Mammary epithelial cell (primary cell): ENCODE measurements at regions of chr1 and their contacts with region 1.

Region 1: GRCh38 chr1:183185941-183186490 is at the start of gene LAMC2:
- DNase-seq: peak; percentile 99
- H3K4me3 ChIP-seq: peak within 1 kb of the TSS; percentile 62 to 98 (median 92)
- H3K27ac ChIP-seq: peak within 1 kb of the TSS; percentile 100
- H3K4me1 ChIP-seq: peaks cover 55% of the 10 kb centered on the region
- H3K27me3 ChIP-seq: no peaks in the 10 kb centered on the region
- CTCF ChIP-seq: peak; percentile 34 to 71
- total RNA-seq, gene LAMC2: 1,201 to 2,277 TPM

Region 2: GRCh38 chr1:183070923-183071618 is 114.9 kb before region 1 on chr1:
- CTCF ChIA-PET with region 1: no interaction called
- dilution Hi-C with region 1: no loop called
- in situ Hi-C with region 1: no loop called
- intact Hi-C with region 1: loop called (anchors 5 kb)
- DNase-seq: peak; percentile 82
- H3K4me3 ChIP-seq: no peak overlapping the region
- H3K27ac ChIP-seq: no peak overlapping the region
- H3K4me1 ChIP-seq: peaks cover 25% of the 10 kb centered on the region
- H3K27me3 ChIP-seq: no peaks in the 10 kb centered on the region
- CTCF ChIP-seq: no peak

Region 3: GRCh38 chr1:183124259-183124658 is 61.8 kb before region 1 on chr1:
- CTCF ChIA-PET with region 1: interaction called, 3 read pairs
- dilution Hi-C with region 1: no loop called
- in situ Hi-C with region 1: no loop called
- intact Hi-C with region 1: loop called (anchors 2 kb)
- DNase-seq: no peak
- H3K4me3 ChIP-seq: no peak overlapping the region
- H3K27ac ChIP-seq: no peak overlapping the region
- H3K4me1 ChIP-seq: no peaks in the 10 kb centered on the region
- H3K27me3 ChIP-seq: no peaks in the 10 kb centered on the region
- CTCF ChIP-seq: no peak

Region 4: GRCh38 chr1:183139281-183139942 is 46.6 kb before region 1 on chr1:
- CTCF ChIA-PET with region 1: no interaction called
- dilution Hi-C with region 1: loop called (anchors 5 kb)
- in situ Hi-C with region 1: loop called in 1 of 2 experiments (anchors 5 kb)
- intact Hi-C with region 1: loop called (anchors 1 kb)
- DNase-seq: peak; percentile 84
- H3K4me3 ChIP-seq: no peak overlapping the region
- H3K27ac ChIP-seq: peak overlapping the region; percentile 79
- H3K4me1 ChIP-seq: peaks cover 30% of the 10 kb centered on the region
- H3K27me3 ChIP-seq: no peaks in the 10 kb centered on the region
- CTCF ChIP-seq: no peak

Region 5: DNA sequence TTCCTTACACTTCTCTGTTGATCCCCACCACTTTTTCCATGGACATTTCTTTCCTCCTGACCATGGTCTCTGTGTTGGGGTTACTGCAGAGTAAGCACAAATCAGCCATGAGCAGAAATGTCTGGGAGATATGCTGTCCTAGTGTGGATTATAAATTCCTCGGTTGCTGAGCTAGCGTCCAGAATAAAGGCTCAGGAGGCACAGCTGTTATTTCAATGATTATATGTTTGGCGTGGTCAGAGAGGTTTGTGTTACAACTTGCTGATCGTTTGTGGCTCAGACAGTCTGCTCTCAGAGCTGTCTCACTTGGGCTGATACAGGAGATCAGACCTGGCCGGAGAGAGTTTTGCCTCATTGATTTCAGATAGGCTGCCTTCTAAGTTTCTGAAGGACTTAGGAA is 37.4 kb before region 1 on chr1:
- CTCF ChIA-PET with region 1: interaction called, 5 read pairs
- dilution Hi-C with region 1: no loop called
- in situ Hi-C with region 1: no loop called
- intact Hi-C with region 1: loop called (anchors 2 kb)
- DNase-seq: peak; percentile 76
- H3K4me3 ChIP-seq: no peak overlapping the region
- H3K27ac ChIP-seq: peak overlapping the region; percentile 53
- H3K4me1 ChIP-seq: peaks cover 22% of the 10 kb centered on the region
- H3K27me3 ChIP-seq: no peaks in the 10 kb centered on the region
- CTCF ChIP-seq: no peak

Region 6: DNA sequence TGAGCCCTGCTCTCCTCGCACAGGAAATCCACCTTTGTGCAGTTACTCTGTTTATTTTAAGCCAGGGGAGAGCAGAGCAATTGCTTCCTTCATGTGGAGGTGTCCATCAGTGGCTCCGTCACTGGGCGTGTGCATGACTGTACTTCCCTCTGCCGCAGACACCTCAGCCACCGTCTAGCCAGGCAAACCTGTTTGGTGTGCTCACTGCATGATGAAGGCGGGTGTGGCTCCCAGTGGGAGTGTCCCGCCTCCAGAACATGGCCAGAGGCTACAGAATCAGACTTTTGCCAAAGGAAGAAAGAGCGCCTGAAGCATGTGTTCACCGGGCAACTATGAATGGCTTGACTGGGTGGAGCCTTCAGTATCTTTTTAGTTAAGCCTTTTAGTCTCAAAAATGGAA is 26.1 kb before region 1 on chr1:
- CTCF ChIA-PET with region 1: no interaction called
- dilution Hi-C with region 1: no loop called
- in situ Hi-C with region 1: no loop called
- intact Hi-C with region 1: loop called (anchors 1 kb)
- DNase-seq: peak; percentile 100
- H3K4me3 ChIP-seq: no peak overlapping the region
- H3K27ac ChIP-seq: peak overlapping the region; percentile 90
- H3K4me1 ChIP-seq: peaks cover 47% of the 10 kb centered on the region
- H3K27me3 ChIP-seq: no peaks in the 10 kb centered on the region
- CTCF ChIP-seq: no peak

Region 7: GRCh38 chr1:183164963-183165362 is 21.1 kb before region 1 on chr1:
- CTCF ChIA-PET with region 1: no interaction called
- dilution Hi-C with region 1: no loop called
- in situ Hi-C with region 1: no loop called
- intact Hi-C with region 1: loop called (anchors 1 kb)
- DNase-seq: peak; percentile 96
- H3K4me3 ChIP-seq: peak overlapping the region in 1 of 3 experiments; percentile 15
- H3K27ac ChIP-seq: peak overlapping the region; percentile 100
- H3K4me1 ChIP-seq: peaks cover 51% of the 10 kb centered on the region
- H3K27me3 ChIP-seq: no peaks in the 10 kb centered on the region
- CTCF ChIP-seq: no peak